ENCODE measurements at regions of chr7 and their contacts with region 1.

Region 1: GRCh38 chr7:106659963-106660861 is 746 bp downstream of the CCDC71L start:
- DNase-seq: peak; percentile 23 to 59
- ATAC-seq: peak; percentile 57 to 66
- H3K4me3 ChIP-seq: peak overlapping the region; percentile 60 to 89 (median 78)
- H3K27ac ChIP-seq: peak overlapping the region; percentile 82 to 91 (median 88)
- H3K4me1 ChIP-seq: peaks cover 8 to 12% of the 10 kb centered on the region in 2 donors
- H3K27me3 ChIP-seq: no peaks in the 10 kb centered on the region
- CTCF ChIP-seq: peak; percentile 49 to 76 (median 67)
- POLR2A ChIP-seq: peak in 1 of 2 donors; percentile 9

Region 2: GRCh38 chr7:106542550-106543220 is 117.5 kb before region 1 on chr7:
- in situ Hi-C with region 1: no loop called
- intact Hi-C with region 1: loop called (anchors 5 kb)
- DNase-seq: peak in 1 of 2 donors; percentile 27
- ATAC-seq: peak; percentile 52 to 58
- H3K4me3 ChIP-seq: no peak overlapping the region
- H3K27ac ChIP-seq: peak overlapping the region in 3 of 4 donors; percentile 22 to 44 (median 33)
- H3K4me1 ChIP-seq: peaks cover 0 to 6% of the 10 kb centered on the region in 2 donors
- H3K27me3 ChIP-seq: no peaks in the 10 kb centered on the region
- CTCF ChIP-seq: peak in 3 of 5 experiments; percentile 34 to 53 (median 50)
- POLR2A ChIP-seq: no peak

Region 3: GRCh38 chr7:106588422-106589198 is 71.6 kb before region 1 on chr7:
- in situ Hi-C with region 1: no loop called
- intact Hi-C with region 1: no loop called
- DNase-seq: no peak
- ATAC-seq: no peak
- H3K4me3 ChIP-seq: no peak overlapping the region
- H3K27ac ChIP-seq: no peak overlapping the region
- H3K4me1 ChIP-seq: no peaks in the 10 kb centered on the region
- H3K27me3 ChIP-seq: no peaks in the 10 kb centered on the region
- CTCF ChIP-seq: no peak
- POLR2A ChIP-seq: no peak

Region 4: GRCh38 chr7:106598663-106599342 is 61.4 kb before region 1 on chr7:
- in situ Hi-C with region 1: no loop called
- intact Hi-C with region 1: loop called (anchors 5 kb)
- DNase-seq: peak; percentile 54 to 73
- ATAC-seq: peak; percentile 98 to 100
- H3K4me3 ChIP-seq: peak overlapping the region; percentile 45 to 50 (median 49)
- H3K27ac ChIP-seq: peak overlapping the region; percentile 57 to 72 (median 66)
- H3K4me1 ChIP-seq: peaks cover 0 to 9% of the 10 kb centered on the region in 2 donors
- H3K27me3 ChIP-seq: no peaks in the 10 kb centered on the region
- CTCF ChIP-seq: no peak
- POLR2A ChIP-seq: no peak

Region 5: GRCh38 chr7:106736508-106737201 is 76.4 kb after region 1 on chr7:
- in situ Hi-C with region 1: loop called in 1 of 4 experiments (anchors 10 kb)
- intact Hi-C with region 1: loop called (anchors 5 kb)
- DNase-seq: no peak
- ATAC-seq: peak; percentile 39 to 70
- H3K4me3 ChIP-seq: no peak overlapping the region
- H3K27ac ChIP-seq: no peak overlapping the region
- H3K4me1 ChIP-seq: no peaks in the 10 kb centered on the region
- H3K27me3 ChIP-seq: no peaks in the 10 kb centered on the region
- CTCF ChIP-seq: peak in 3 of 5 experiments; percentile 37 to 50 (median 45)
- POLR2A ChIP-seq: no peak

Region 6: DNA sequence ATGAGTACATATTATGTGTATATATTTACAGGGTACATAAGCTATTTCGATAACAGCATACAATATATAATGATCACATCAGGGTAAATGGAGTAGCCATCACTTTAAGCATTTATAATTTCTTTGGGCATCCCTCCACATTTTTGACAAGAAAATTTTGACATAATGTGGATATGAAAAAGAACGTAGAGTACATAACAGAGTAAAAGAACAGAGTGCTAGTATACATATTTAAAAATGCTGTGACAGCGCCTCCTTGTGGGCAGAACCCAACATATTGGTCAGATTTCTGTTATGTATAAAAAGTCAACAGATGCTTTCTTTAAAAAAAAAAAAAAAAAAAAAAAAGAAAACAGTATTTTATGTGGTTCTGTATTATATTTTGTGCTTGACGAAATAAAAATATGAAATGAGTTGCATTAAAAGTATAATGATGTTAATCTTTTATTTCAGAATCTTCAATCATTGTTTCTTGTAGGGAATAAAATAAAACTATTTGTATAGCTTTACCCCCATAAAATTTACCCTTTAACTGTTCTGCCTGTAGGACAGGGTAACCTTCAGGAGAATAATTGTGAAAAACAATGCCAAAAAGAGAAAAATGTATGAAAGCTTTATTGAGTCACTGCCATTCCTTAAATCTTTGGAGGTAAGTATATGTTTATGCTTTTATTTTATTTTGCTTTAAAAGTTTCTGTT is 490.3 kb after region 1 on chr7:
- in situ Hi-C with region 1: loop called in 2 of 4 experiments (anchors 25 kb)
- intact Hi-C with region 1: no loop called
- DNase-seq: peak; percentile 7 to 46
- ATAC-seq: peak; percentile 58 to 64
- H3K4me3 ChIP-seq: no peak overlapping the region
- H3K27ac ChIP-seq: no peak overlapping the region
- H3K4me1 ChIP-seq: peaks cover 3 to 6% of the 10 kb centered on the region in 2 donors
- H3K27me3 ChIP-seq: no peaks in the 10 kb centered on the region
- CTCF ChIP-seq: peak; percentile 34 to 66 (median 50)
- POLR2A ChIP-seq: no peak